Adrenal gland (tissue), 19 donors: ENCODE measurements at regions of chr4 and their contacts with region 1.

Region 1: DNA sequence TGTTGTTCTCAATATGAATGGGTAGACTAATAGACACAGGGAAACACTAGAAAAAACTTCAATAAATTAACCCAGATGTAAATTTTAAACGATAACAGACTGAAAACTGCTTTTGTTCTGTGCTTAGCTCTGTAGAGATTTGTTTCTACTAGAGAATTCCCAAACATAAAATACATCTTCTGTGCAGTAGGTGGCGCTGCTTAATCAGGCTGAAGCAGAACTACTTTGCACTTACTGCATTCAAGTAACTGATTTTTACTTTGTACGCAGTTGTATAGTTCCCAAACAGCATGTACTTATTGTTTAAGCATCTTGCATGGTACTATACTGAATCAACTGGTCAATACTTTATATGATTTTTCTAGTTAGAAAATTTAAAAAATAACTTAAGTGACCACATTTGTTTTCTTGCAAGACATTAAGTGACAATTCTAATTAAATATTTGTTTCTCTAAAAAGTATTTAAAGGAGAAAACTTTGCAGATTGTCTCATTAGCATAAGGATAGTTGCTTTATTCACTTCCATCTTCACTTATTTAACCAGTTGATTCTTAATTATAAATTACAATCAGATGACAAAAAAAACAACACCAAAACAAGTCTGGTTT is 490.6 kb downstream of the IL15 start:
- DNase-seq: peak; percentile 50 to 83 (median 67)
- H3K4me3 ChIP-seq: no peak overlapping the region
- H3K27ac ChIP-seq: no peak overlapping the region
- H3K4me1 ChIP-seq: no peaks in the 10 kb centered on the region
- H3K27me3 ChIP-seq: no peaks in the 10 kb centered on the region
- CTCF ChIP-seq: peak; percentile 72 to 93 (median 82)
- POLR2A ChIP-seq: no peak

Region 2: GRCh38 chr4:142095886-142096605 is 30.9 kb before region 1 on chr4:
- intact Hi-C with region 1: no loop called
- DNase-seq: peak; percentile 62 to 91 (median 86)
- H3K4me3 ChIP-seq: no peak overlapping the region
- H3K27ac ChIP-seq: peak overlapping the region in 1 of 5 donors; percentile 33
- H3K4me1 ChIP-seq: peaks cover 0 to 4% of the 10 kb centered on the region in 2 donors
- H3K27me3 ChIP-seq: no peaks in the 10 kb centered on the region
- CTCF ChIP-seq: no peak
- POLR2A ChIP-seq: no peak

Region 3: GRCh38 chr4:142353149-142353738 is 226.2 kb after region 1 on chr4:
- intact Hi-C with region 1: loop called in 1 of 2 experiments (anchors 10 kb)
- DNase-seq: peak in 5 of 7 donors; percentile 20 to 47 (median 33)
- H3K4me3 ChIP-seq: no peak overlapping the region
- H3K27ac ChIP-seq: peak overlapping the region in 1 of 5 donors; percentile 5
- H3K4me1 ChIP-seq: peaks cover 18 to 44% of the 10 kb centered on the region in 2 donors
- H3K27me3 ChIP-seq: no peaks in the 10 kb centered on the region
- CTCF ChIP-seq: peak; percentile 71 to 94 (median 86)
- POLR2A ChIP-seq: no peak

Region 4: GRCh38 chr4:142846729-142847596 is 720.0 kb after region 1 on chr4:
- intact Hi-C with region 1: loop called in 1 of 2 experiments (anchors 10 kb)
- DNase-seq: peak in 5 of 7 donors; percentile 19 to 67 (median 31)
- H3K4me3 ChIP-seq: peak overlapping the region in 3 of 4 donors; percentile 5 to 51 (median 45)
- H3K27ac ChIP-seq: no peak overlapping the region
- H3K4me1 ChIP-seq: peaks cover 11 to 14% of the 10 kb centered on the region in 2 donors
- H3K27me3 ChIP-seq: no peaks in the 10 kb centered on the region
- CTCF ChIP-seq: peak in 4 of 6 experiments; percentile 7 to 38 (median 30)
- POLR2A ChIP-seq: no peak